ENCODE measurements at regions of chr15 and their contacts with region 1.

Region 1: GRCh38 chr15:35444557-35445204 is 101.3 kb downstream of the DPH6 start:
- DNase-seq: peak; percentile 19 to 48 (median 28)
- H3K4me3 ChIP-seq: no peak overlapping the region
- H3K27ac ChIP-seq: no peak overlapping the region
- H3K4me1 ChIP-seq: no peaks in the 10 kb centered on the region
- H3K27me3 ChIP-seq: no peaks in the 10 kb centered on the region

Region 2: GRCh38 chr15:35078221-35078915 is 366.3 kb before region 1 on chr15:
- CTCF ChIA-PET with region 1: interaction called, 34 read pairs
- POLR2A ChIA-PET with region 1: no interaction called
- DNase-seq: peak; percentile 45 to 71 (median 67)
- H3K4me3 ChIP-seq: no peak overlapping the region
- H3K27ac ChIP-seq: no peak overlapping the region
- H3K4me1 ChIP-seq: no peaks in the 10 kb centered on the region
- H3K27me3 ChIP-seq: no peaks in the 10 kb centered on the region

Region 3: DNA sequence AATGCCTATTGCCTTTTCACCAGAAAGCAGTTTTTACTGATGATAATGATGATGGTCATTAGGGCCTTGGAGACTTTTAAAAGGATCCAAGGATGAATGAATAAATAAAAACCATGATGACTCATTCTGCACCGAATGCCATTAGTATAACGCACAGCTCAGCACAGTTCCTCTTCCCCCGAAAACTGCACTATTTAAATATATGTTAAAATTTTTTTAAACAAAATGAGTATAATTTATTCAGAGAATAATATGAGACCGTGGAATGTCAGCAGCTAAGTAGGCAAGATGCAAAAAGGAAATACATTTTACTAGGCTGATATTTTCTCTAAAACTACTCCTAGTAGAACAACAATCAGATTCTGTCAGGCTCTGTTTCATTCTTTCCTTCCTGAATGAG is 276.2 kb before region 1 on chr15:
- CTCF ChIA-PET with region 1: no interaction called
- POLR2A ChIA-PET with region 1: no interaction called
- DNase-seq: no peak
- H3K4me3 ChIP-seq: no peak overlapping the region
- H3K27ac ChIP-seq: no peak overlapping the region
- H3K4me1 ChIP-seq: no peaks in the 10 kb centered on the region
- H3K27me3 ChIP-seq: no peaks in the 10 kb centered on the region

Region 4: DNA sequence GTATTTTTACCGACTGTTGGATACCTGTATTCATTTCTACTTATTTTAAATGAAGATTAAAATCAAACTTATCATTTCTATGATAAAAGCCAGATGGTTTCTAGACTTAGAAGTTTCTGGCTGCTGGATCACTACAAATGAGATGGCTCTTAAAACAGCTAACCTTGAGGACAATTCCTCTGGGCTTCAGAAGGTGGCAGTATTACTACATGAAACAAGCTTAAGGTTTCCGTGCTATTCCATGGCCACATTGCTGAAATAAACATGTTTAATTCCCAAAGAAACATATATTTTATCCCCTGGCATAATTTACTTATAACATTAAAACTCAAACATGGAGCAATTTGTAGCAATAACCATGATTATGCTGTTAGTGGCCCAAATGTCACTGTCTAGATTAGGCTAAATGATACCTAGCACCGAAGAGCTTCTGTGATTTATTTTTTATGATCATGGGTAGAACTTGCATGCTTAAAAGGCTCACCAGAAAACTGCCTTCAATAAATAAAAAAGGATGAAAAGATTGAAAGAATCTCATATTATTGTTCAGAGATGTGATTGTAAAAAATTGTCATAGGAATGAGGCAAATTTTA is 155.6 kb before region 1 on chr15:
- CTCF ChIA-PET with region 1: interaction called, 68 read pairs
- POLR2A ChIA-PET with region 1: interaction called, 3 read pairs
- DNase-seq: peak; percentile 24 to 50 (median 46)
- H3K4me3 ChIP-seq: no peak overlapping the region
- H3K27ac ChIP-seq: no peak overlapping the region
- H3K4me1 ChIP-seq: no peaks in the 10 kb centered on the region
- H3K27me3 ChIP-seq: no peaks in the 10 kb centered on the region

Region 5: DNA sequence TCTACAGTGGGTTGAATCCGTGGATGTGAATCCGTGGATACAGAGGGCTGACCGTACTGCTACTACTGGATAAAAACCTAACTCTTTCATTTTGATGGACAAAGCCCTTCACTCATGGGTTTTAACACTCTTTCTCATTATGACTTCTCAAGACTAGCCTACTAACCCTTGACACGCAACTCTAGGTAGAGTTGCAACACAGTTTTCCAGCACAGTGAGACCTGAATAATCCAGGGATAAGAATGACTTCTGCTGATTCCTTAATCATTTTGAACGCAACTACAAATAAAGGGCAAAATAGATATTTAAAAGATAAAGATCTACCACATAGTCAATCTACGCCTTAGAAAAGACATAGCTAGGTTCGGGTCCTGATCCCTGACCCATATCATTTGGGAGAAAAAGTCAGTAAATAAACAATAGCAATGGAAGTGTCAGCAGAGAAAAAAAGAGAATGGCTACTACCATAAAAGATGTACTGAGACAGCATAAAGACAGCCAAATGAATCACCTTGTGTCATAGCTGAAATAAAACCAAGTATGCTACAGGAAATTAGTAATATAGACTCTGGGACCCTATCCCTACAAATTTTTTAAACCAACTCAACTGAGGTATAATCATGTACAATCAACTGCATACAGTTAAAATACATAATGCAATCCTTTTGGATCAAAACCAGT is 13.6 kb after region 1 on chr15:
- CTCF ChIA-PET with region 1: interaction called, 14 read pairs
- POLR2A ChIA-PET with region 1: no interaction called
- DNase-seq: no peak
- H3K4me3 ChIP-seq: no peak overlapping the region
- H3K27ac ChIP-seq: no peak overlapping the region
- H3K4me1 ChIP-seq: no peaks in the 10 kb centered on the region
- H3K27me3 ChIP-seq: no peaks in the 10 kb centered on the region

Region 6: DNA sequence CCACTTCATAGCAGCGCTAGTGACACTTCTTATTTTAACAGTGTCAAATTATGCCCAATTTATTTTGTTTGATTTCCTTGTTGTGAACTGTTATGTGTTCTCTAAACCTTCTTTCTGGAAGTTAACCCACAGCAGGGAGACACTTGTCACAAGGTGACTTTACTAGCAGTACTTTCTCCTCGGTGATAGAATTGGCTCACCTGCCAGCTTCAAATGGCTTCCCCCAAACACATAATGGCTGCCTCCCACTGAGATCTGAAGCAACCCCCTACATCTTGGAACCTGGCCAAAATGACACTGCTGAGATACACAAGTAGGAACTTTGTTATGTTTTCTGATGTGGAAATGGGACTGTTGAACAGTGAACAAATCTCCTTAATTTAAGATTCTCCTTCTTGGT is 340.1 kb after region 1 on chr15:
- CTCF ChIA-PET with region 1: no interaction called
- POLR2A ChIA-PET with region 1: no interaction called
- DNase-seq: no peak
- H3K4me3 ChIP-seq: no peak overlapping the region
- H3K27ac ChIP-seq: no peak overlapping the region
- H3K4me1 ChIP-seq: no peaks in the 10 kb centered on the region
- H3K27me3 ChIP-seq: no peaks in the 10 kb centered on the region